Activated CD8-positive, alpha-beta T cell treated with anti-CD3 and anti-CD28 coated beads, Interleukin-2, amount 10 ng/mL, durations not matched to agents 7 days and 5 days (primary cell): ENCODE measurements at regions of chr9 and their contacts with region 1.

Region 1: DNA sequence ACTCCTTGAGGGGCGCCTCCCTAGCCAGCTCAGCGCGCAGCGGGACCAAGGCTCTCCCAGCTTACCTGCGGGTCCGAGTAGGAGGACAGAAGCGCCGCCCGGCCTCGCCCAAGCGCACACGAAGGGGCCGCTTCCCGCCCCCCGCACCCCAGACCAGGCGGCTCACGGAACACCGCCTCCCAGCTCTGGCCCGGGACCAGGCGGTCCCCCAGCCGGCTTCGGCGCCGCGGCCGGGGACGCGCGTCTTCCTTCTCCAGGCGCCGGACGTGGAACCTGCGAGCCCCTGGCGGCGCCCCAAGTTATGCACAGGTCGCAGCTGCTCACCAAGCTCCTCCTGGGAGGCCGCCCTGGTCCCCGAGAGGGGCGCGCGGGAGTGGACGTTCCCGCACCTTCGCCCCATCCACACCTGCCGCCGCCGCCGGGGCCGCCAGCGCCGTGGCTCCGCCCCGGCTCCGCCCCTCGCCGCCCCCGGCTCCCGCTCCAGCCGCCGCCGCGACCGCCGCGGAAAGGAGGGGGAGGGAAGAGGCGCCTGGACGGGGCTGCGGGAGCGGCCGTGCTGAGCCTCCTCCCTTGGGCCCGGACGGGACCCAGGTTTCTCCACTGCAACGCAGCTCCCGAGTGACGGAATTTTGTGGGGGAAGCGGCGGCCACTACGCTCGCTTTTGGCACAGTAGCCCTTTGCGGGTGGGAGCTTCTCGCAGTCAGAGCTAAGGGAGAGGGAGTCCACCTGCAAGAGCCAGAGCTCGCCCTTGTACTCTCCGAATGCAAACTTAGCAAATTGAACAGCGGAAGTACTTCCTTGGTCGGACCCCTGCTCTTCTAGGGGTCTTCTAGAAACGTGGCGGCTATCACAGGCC is 77.5 kb upstream of the IFNE start:
- DNase-seq: peak; percentile 64
- ATAC-seq: peak; percentile 94
- H3K4me3 Mint-ChIP-seq: peak overlapping the region; percentile 91
- H3K27ac Mint-ChIP-seq: no peak overlapping the region
- H3K4me1 Mint-ChIP-seq: peaks cover 25% of the 10 kb centered on the region
- H3K27me3 Mint-ChIP-seq: peaks cover 34% of the 10 kb centered on the region

Region 2: DNA sequence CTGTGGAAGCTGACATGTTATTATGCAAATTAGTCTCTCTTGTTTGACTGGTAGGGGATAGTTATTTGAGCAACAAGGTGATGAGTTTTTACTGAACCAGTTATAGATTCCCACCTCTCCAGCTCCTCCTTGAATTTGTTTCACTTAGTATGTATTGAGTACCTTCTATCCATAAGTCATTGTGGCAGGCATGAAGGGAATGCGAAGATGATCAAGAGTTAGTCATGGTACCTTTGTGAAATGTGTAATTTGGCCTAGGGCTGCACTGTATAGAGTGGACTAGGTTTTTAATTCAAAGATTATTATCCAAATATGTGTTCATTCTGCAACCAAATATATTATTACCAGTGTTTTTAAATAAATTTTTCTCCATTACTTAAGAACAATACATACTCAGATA is 638.3 kb before region 1 on chr9:
- CTCF ChIA-PET with region 1: no interaction called
- POLR2A ChIA-PET with region 1: no interaction called
- DNase-seq: no peak
- ATAC-seq: no peak
- H3K4me3 Mint-ChIP-seq: no peak overlapping the region
- H3K27ac Mint-ChIP-seq: no peak overlapping the region
- H3K4me1 Mint-ChIP-seq: peaks cover 13% of the 10 kb centered on the region
- H3K27me3 Mint-ChIP-seq: no peaks in the 10 kb centered on the region

Region 3: DNA sequence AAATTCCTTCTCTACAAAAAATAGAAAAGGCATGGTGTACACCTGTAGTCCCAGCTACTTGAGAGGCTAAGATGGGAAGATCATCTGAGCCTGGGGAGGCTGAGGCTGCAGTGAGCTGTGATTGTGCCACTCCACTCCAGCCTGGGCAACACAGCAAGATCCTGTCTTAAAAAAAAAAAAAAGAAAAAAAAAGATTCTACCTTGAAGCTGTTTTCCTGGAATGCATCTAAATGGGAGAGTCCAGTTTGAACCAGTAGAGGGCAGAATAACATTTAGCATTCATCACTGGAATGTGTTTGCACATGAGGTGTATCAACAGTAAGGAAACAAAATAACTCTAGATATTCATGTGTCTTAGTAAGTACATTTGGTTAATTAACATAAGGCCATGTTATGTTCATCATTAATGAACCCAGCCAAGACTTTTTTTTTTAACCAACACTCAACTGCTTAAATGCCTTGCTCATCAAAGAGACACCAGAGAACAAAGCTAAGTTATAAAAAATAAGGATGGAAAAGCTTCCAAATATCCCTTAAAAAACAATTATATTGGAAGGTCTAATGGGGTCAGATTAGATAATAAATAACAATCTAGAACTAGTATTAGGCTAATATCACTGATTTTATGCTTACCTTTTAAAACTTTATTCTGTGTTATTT is 93.7 kb before region 1 on chr9:
- CTCF ChIA-PET with region 1: interaction called, 10 read pairs
- POLR2A ChIA-PET with region 1: no interaction called
- DNase-seq: peak; percentile 43
- ATAC-seq: peak; percentile 65
- H3K4me3 Mint-ChIP-seq: no peak overlapping the region
- H3K27ac Mint-ChIP-seq: no peak overlapping the region
- H3K4me1 Mint-ChIP-seq: no peaks in the 10 kb centered on the region
- H3K27me3 Mint-ChIP-seq: peaks cover 15% of the 10 kb centered on the region

Region 4: DNA sequence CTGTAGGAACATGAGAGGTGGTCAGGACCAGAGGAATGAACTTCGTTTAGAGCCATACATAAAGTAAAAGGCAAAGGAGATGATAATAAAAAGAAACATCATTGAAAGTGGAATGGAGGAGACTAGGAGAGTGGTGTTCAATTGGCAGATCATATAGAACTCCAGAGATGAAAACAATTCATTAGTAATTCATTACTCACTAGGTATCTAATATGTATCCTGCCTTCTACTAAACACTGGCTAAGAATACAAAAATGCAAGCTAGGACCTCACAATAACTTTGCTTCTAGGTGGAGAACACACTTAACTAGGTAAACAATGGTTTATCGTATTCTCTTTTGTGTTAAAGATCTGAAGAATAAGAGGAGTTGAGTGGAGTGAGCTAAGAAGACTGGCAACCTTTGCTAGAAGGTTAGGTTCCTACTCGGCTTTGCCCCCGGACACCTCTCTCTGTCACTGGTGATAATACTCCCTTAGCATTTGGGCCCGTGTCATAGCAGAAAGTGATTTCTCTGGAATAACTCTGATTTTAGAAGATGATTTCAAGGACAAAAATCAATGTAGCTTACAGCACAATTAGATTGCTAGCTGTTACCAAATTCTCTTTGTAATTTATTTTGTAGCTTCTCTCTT is 11.1 kb after region 1 on chr9:
- CTCF ChIA-PET with region 1: interaction called, 17 read pairs
- POLR2A ChIA-PET with region 1: interaction called, 4 read pairs
- DNase-seq: no peak
- ATAC-seq: no peak
- H3K4me3 Mint-ChIP-seq: no peak overlapping the region
- H3K27ac Mint-ChIP-seq: no peak overlapping the region
- H3K4me1 Mint-ChIP-seq: no peaks in the 10 kb centered on the region
- H3K27me3 Mint-ChIP-seq: peaks cover 18% of the 10 kb centered on the region

Region 5: GRCh38 chr9:21579209-21579608 is 19.6 kb after region 1 on chr9:
- CTCF ChIA-PET with region 1: interaction called, 12 read pairs
- POLR2A ChIA-PET with region 1: interaction called, 4 read pairs
- DNase-seq: peak; percentile 76
- ATAC-seq: peak; percentile 87
- H3K4me3 Mint-ChIP-seq: peak overlapping the region; percentile 78
- H3K27ac Mint-ChIP-seq: peak overlapping the region; percentile 90
- H3K4me1 Mint-ChIP-seq: peaks cover 60% of the 10 kb centered on the region
- H3K27me3 Mint-ChIP-seq: no peaks in the 10 kb centered on the region

Region 6: GRCh38 chr9:21597284-21597683 is 37.6 kb after region 1 on chr9:
- CTCF ChIA-PET with region 1: no interaction called
- POLR2A ChIA-PET with region 1: no interaction called
- DNase-seq: no peak
- ATAC-seq: no peak
- H3K4me3 Mint-ChIP-seq: no peak overlapping the region
- H3K27ac Mint-ChIP-seq: no peak overlapping the region
- H3K4me1 Mint-ChIP-seq: peaks cover 3% of the 10 kb centered on the region
- H3K27me3 Mint-ChIP-seq: no peaks in the 10 kb centered on the region